T-cell (primary cell): ENCODE measurements at regions of chr7 and their contacts with region 1.

Region 1: DNA sequence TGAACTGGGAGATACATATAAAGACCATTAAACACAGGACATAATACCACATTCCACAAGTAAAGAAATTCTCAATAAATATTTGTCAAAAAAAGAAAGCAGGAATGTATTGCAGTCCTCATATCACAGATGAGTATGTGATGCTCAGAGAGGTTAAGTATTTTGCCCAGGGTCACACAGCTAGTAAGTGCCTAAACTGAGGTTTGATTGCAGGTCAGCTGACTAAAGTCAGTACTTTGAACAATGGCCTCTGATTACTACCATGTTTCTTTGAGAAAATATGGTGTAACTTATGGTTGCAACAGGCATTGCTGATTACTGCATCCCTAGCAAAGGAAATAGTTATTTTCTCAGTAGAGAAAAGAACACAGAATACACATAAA is 267.1 kb downstream of the ELMO1 start:
- DNase-seq: no peak
- ATAC-seq: no peak
- H3K4me3 ChIP-seq: no peak overlapping the region
- H3K4me3 Mint-ChIP-seq: no peak overlapping the region
- H3K27ac ChIP-seq: no peak overlapping the region
- H3K27ac Mint-ChIP-seq: no peak overlapping the region
- H3K4me1 ChIP-seq: peaks cover 4% of the 10 kb centered on the region in 2 experiments
- H3K4me1 Mint-ChIP-seq: peaks cover 0 to 7% (median 4%) of the 10 kb centered on the region in 3 donors
- H3K27me3 ChIP-seq: no peaks in the 10 kb centered on the region
- H3K27me3 Mint-ChIP-seq: no peaks in the 10 kb centered on the region

Region 2: DNA sequence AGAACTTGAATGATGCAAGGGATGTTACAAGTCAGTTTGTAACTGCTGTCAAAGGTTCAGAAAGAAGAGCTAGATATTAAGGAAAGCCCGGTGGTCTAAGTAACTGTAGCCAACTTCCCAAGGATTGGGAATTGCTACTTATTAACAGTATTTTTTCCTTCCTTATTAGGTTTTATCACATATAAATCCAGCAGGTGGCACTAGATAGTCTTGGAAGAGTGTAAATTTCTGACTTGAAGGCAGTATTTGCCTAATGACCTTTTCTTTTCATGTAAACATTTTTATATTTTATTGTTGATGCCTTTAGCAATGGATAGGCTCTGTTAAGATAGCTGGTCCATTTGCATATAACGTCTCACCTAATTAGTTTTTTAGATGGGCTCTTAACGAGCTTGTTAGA is 740.7 kb before region 1 on chr7:
- CTCF ChIA-PET with region 1: interaction called, 12 to 16 read pairs
- POLR2A ChIA-PET with region 1: no interaction called
- DNase-seq: peak in 1 of 35 experiments; percentile 24
- ATAC-seq: no peak
- H3K4me3 ChIP-seq: no peak overlapping the region
- H3K4me3 Mint-ChIP-seq: no peak overlapping the region
- H3K27ac ChIP-seq: no peak overlapping the region
- H3K27ac Mint-ChIP-seq: no peak overlapping the region
- H3K4me1 ChIP-seq: no peaks in the 10 kb centered on the region
- H3K4me1 Mint-ChIP-seq: no peaks in the 10 kb centered on the region
- H3K27me3 ChIP-seq: no peaks in the 10 kb centered on the region
- H3K27me3 Mint-ChIP-seq: no peaks in the 10 kb centered on the region

Region 3: GRCh38 chr7:36639826-36640225 is 541.7 kb before region 1 on chr7:
- CTCF ChIA-PET with region 1: interaction called, 4 to 12 read pairs
- POLR2A ChIA-PET with region 1: no interaction called
- DNase-seq: peak; percentile 34 to 86 (median 64)
- ATAC-seq: peak; percentile 94 to 95 (median 95)
- H3K4me3 ChIP-seq: peak overlapping the region in 1 of 2 donors; percentile 5
- H3K4me3 Mint-ChIP-seq: peak overlapping the region; percentile 45 to 74 (median 54)
- H3K27ac ChIP-seq: peak overlapping the region; percentile 78
- H3K27ac Mint-ChIP-seq: peak overlapping the region; percentile 98 to 99
- H3K4me1 ChIP-seq: peaks cover 51 to 61% of the 10 kb centered on the region in 2 experiments
- H3K4me1 Mint-ChIP-seq: peaks cover 85 to 87% (median 87%) of the 10 kb centered on the region in 3 donors
- H3K27me3 ChIP-seq: no peaks in the 10 kb centered on the region
- H3K27me3 Mint-ChIP-seq: no peaks in the 10 kb centered on the region

Region 4: GRCh38 chr7:36683695-36684357 is 497.7 kb before region 1 on chr7:
- CTCF ChIA-PET with region 1: interaction called, 4 to 13 read pairs
- POLR2A ChIA-PET with region 1: interaction called in 1 of 2 experiments, 8 read pairs
- DNase-seq: no peak
- ATAC-seq: no peak
- H3K4me3 ChIP-seq: no peak overlapping the region
- H3K4me3 Mint-ChIP-seq: no peak overlapping the region
- H3K27ac ChIP-seq: no peak overlapping the region
- H3K27ac Mint-ChIP-seq: peak overlapping the region in 1 of 2 donors; percentile 44
- H3K4me1 ChIP-seq: peaks cover 13 to 15% of the 10 kb centered on the region in 2 experiments
- H3K4me1 Mint-ChIP-seq: peaks cover 39 to 53% (median 39%) of the 10 kb centered on the region in 3 donors
- H3K27me3 ChIP-seq: no peaks in the 10 kb centered on the region
- H3K27me3 Mint-ChIP-seq: no peaks in the 10 kb centered on the region

Region 5: GRCh38 chr7:37352974-37353948 is 171.7 kb after region 1 on chr7:
- CTCF ChIA-PET with region 1: interaction called in 1 of 2 experiments, 11 read pairs
- POLR2A ChIA-PET with region 1: no interaction called
- DNase-seq: peak; percentile 45 to 86 (median 75)
- ATAC-seq: peak; percentile 85 to 89 (median 86)
- H3K4me3 ChIP-seq: peak overlapping the region; percentile 57 to 83
- H3K4me3 Mint-ChIP-seq: peak overlapping the region; percentile 94 to 97 (median 96)
- H3K27ac ChIP-seq: peak overlapping the region; percentile 65
- H3K27ac Mint-ChIP-seq: peak overlapping the region; percentile 86 to 90
- H3K4me1 ChIP-seq: peaks cover 34 to 40% of the 10 kb centered on the region in 2 experiments
- H3K4me1 Mint-ChIP-seq: peaks cover 91 to 99% (median 92%) of the 10 kb centered on the region in 3 donors
- H3K27me3 ChIP-seq: no peaks in the 10 kb centered on the region
- H3K27me3 Mint-ChIP-seq: no peaks in the 10 kb centered on the region

Region 6: DNA sequence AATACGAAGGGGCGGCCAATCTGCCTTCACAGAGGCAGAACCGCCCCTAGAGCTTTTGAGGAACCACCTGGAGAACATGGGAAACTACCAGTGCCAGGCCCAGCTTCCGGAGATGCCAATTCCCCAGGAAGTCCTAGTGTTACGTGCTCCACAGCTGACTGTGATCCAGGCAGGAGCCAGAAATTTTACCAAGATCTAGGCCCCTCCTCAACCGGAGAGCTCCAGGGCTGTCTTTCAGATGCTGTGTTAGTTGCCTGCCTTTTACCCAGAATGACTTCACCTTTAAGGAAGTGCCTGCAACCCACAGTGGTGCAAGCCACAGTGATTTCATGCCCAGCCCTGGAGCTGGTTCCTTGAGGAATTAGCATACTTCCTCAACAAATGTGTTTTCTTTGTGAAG is 204.2 kb after region 1 on chr7:
- CTCF ChIA-PET with region 1: no interaction called
- POLR2A ChIA-PET with region 1: no interaction called
- DNase-seq: no peak
- ATAC-seq: no peak
- H3K4me3 ChIP-seq: no peak overlapping the region
- H3K4me3 Mint-ChIP-seq: no peak overlapping the region
- H3K27ac ChIP-seq: no peak overlapping the region
- H3K27ac Mint-ChIP-seq: no peak overlapping the region
- H3K4me1 ChIP-seq: peaks cover 2 to 4% of the 10 kb centered on the region in 2 experiments
- H3K4me1 Mint-ChIP-seq: peaks cover 30 to 56% (median 46%) of the 10 kb centered on the region in 3 donors
- H3K27me3 ChIP-seq: no peaks in the 10 kb centered on the region
- H3K27me3 Mint-ChIP-seq: no peaks in the 10 kb centered on the region